Activated CD8-positive, alpha-beta T cell treated with anti-CD3 and anti-CD28 coated beads for 36 hours (primary cell): ENCODE measurements at regions of chr12 and their contacts with region 1.

Region 1: DNA sequence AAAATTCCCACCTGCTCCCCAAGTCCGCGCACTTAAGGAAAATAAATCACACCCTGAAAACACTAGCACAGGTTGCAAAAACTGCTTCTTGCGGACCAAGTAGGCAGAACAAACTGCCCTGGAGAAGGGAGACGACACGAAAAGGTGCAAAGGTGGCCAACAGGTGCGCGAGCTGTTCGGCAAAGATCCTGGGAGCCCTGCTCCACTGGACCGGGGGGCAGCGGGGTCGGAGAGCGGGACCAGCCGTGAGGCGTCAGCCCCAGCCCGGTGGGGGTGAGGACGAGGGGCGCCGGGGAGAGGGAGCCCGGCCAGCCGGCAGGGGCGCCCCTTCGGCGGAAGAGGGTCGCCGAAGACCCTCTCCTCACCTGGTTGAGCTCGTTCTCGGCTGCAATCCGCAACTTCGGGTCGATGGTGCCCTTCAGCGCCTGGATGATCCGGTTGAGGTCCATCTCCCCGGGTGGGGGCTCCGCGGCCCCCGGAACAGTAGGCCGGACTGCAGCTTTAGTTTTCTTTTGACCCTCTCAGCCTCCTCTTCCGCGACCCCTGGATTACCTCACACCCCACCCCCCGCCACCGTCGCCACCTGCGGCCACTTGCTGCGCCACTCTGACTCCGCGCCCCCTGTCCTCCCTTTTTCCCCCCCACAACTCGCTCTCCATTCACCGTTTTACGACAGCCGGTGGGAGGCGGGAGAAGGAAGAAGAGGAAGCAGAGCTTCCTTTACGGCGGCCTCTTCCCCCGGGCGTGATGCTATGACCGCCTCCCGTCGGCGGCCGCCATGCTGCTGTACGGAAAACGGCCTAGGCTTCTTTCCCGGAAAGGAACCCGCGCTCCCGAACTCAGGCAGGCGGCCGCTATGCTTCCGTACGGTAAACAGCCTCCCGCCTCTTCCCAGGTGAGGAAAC is at the start of gene IPO8:
- DNase-seq: peak; percentile 92
- ATAC-seq: peak; percentile 92
- H3K4me3 Mint-ChIP-seq: peak within 1 kb of the TSS; percentile 89
- H3K27ac Mint-ChIP-seq: peak within 1 kb of the TSS; percentile 92
- H3K4me1 Mint-ChIP-seq: peaks cover 33% of the 10 kb centered on the region
- H3K27me3 Mint-ChIP-seq: peaks cover 1% of the 10 kb centered on the region
- CTCF ChIP-seq: peak; percentile 40
- total RNA-seq, gene IPO8: 40.2 to 47.7 TPM

Region 2: DNA sequence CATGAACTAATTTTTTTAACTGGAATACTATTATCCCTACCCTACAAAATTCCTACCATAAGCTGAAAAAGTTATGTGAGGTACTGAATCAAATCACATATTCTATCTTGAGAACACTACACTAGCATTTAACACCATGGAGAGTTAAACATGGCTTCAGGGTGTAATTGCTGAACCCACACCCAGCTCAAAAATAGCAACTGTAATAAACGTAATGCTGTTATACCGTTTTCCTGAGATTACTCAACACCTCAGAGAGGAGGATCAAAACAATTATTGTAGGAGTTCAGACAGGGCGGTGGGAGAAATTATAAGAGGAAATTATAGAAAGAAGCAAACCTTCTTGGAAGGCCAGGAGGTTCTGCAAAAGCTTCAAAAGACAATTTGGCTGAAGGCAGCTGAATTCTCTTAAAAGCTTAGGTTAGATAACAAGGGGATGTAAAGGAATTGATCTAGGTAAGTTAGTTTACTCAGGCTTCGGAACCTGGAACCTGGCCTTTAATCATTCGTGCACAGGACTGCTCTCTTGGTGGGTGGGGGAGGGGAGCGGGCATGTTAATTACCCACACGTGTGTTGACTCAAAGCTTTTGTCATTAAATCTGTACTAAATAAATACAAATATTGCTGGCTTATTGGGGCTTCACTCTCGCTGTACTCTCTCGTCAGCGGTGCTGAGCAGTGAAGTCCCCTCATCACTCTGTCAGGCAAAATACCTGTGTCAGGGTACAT is 12.3 kb after region 1 on chr12:
- CTCF ChIA-PET with region 1: interaction called, 11 read pairs
- POLR2A ChIA-PET with region 1: interaction called, 3 read pairs
- intact Hi-C with region 1: no loop called
- DNase-seq: no peak
- ATAC-seq: no peak
- H3K4me3 Mint-ChIP-seq: no peak overlapping the region
- H3K27ac Mint-ChIP-seq: no peak overlapping the region
- H3K4me1 Mint-ChIP-seq: no peaks in the 10 kb centered on the region
- H3K27me3 Mint-ChIP-seq: no peaks in the 10 kb centered on the region
- CTCF ChIP-seq: no peak

Region 3: GRCh38 chr12:30913323-30913722 is 217.9 kb after region 1 on chr12:
- CTCF ChIA-PET with region 1: no interaction called
- POLR2A ChIA-PET with region 1: no interaction called
- intact Hi-C with region 1: no loop called
- DNase-seq: no peak
- ATAC-seq: no peak
- H3K4me3 Mint-ChIP-seq: no peak overlapping the region
- H3K27ac Mint-ChIP-seq: no peak overlapping the region
- H3K4me1 Mint-ChIP-seq: no peaks in the 10 kb centered on the region
- H3K27me3 Mint-ChIP-seq: no peaks in the 10 kb centered on the region
- CTCF ChIP-seq: no peak